Sciatic nerve (tissue), 2 donors: ENCODE measurements at regions of chr1 and their contacts with region 1.

Region 1: GRCh38 chr1:19151537-19151936 is 58.5 kb downstream of the UBR4 start:
- DNase-seq: no peak
- ATAC-seq: no peak

Region 2: DNA sequence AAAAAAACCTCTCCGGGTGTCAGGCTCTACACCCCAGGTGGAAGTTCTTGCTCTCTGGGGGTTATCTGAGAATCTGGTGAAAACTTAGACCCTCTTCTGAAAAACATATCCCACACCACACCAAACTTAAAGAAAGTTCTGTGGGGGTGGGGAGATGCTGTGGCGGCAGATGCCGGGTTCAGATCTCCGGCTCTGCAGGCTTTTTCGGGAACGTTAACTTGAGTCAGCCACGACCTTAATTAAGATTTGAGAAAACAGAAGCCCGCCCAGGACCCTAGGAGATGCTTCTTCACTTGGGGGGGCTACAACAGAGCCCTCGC is 1714.3 kb before region 1 on chr1:
- intact Hi-C with region 1: no loop called
- DNase-seq: no peak
- ATAC-seq: no peak

Region 3: GRCh38 chr1:19123837-19124236 is 27.7 kb before region 1 on chr1:
- intact Hi-C with region 1: loop called (anchors 1 kb)
- DNase-seq: no peak
- ATAC-seq: no peak

Region 4: DNA sequence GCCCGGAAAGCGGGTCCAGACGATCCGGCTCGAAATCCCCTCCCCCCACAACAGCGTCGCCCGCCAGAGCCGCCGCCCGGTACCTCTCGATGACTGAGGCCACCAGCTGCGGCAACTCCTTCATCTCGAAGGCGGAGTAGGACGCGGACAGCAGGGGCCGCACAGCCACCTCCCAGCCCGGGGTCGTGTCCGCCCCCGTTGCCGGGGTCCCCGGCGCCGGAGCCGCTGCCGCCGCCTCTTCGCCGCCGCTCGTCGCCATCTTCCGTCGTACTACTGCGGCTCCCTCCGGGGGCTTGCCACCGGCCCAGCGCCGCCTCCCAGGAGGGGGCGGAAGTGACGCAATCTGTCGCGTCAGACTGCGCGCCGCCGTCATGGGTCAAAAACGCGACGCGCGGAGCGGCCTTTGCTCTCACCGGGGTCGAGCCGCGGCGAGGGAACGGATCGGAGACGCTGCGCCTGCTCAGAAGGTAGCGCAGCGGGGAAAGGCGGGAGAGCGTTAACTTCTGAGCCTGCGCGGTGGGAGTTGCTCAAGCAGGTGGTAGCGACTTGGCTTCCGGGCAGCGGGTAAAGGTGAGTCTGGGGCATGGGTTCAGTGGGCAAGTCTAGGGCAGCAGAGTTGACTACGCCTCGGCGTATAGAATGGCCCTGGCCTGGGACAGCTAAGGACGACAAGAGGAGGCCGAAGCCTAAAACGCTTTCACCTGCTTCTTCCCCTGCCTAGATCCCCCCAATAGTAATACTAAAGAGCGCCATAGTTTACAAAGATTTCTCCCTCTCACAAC is 58.6 kb after region 1 on chr1 and contains the start of gene UBR4:
- intact Hi-C with region 1: no loop called
- DNase-seq: peak; percentile 97
- ATAC-seq: peak; percentile 98
- total RNA-seq, gene UBR4: 161 TPM